Heart left ventricle (tissue), 16 donors: ENCODE measurements at regions of chr1 and their contacts with region 1.

Region 1: GRCh38 chr1:156728597-156729462 is at the start of gene ISG20L2:
- DNase-seq: peak; percentile 96 to 98 (median 97)
- ATAC-seq: peak; percentile 88 to 97 (median 96)
- H3K4me3 ChIP-seq: peak within 1 kb of the TSS; percentile 57 to 96 (median 82)
- H3K27ac ChIP-seq: peak within 1 kb of the TSS; percentile 88 to 99 (median 96)
- H3K4me1 ChIP-seq: peaks cover 22 to 54% (median 36%) of the 10 kb centered on the region in 12 donors
- H3K27me3 ChIP-seq: no peaks in the 10 kb centered on the region
- CTCF ChIP-seq: no peak
- POLR2A ChIP-seq: peak in 1 of 2 donors; percentile 61
- total RNA-seq, gene ISG20L2: 8.4 to 17.9 (median 12.8) TPM

Region 2: DNA sequence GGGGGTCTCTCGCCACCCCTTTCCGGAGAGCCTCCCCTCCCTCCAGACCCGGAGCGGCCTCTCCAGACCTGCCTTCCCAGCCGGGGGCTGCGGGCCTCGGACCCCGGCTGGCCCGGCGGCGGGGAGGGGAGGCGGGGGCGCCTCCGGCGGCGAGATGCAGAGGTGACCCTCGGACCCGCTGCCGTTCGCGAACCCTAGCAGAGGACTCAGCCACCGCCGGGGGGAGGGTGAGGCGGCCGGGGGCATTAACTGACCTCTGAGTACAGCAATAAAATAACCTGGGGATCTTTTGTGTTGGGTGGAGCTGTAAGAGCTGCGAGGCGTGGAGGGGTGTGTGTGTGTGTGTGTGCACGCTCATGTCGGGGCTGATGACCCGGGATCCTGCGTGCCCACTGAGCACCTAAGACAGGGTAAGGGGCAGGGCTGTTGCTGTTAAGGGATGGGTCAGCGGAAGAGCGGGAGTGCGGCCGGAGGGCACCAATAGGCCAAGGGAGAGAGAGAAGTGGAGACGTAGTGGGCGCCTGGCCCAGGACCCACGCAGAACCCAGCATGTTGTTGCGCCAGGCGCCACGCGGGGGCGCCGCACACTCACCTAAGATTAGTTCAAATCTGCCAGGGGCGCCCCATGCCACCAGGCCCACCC is 103.3 kb before region 1 on chr1:
- intact Hi-C with region 1: loop called in 3 of 10 experiments (anchors 2 to 10 kb)
- DNase-seq: peak in 4 of 5 donors; percentile 46 to 81 (median 64)
- ATAC-seq: peak; percentile 40 to 67 (median 48)
- H3K4me3 ChIP-seq: peak overlapping the region; percentile 26 to 59 (median 50)
- H3K27ac ChIP-seq: peak overlapping the region in 9 of 12 donors; percentile 14 to 81 (median 67)
- H3K4me1 ChIP-seq: peaks cover 5 to 36% (median 22%) of the 10 kb centered on the region in 12 donors
- H3K27me3 ChIP-seq: peaks cover 3 to 67% (median 50%) of the 10 kb centered on the region in 9 donors
- CTCF ChIP-seq: peak; percentile 62 to 85 (median 80)
- POLR2A ChIP-seq: no peak

Region 3: GRCh38 chr1:156689035-156689952 is 39.5 kb before region 1 on chr1:
- intact Hi-C with region 1: loop called (anchors 1 to 2 kb)
- DNase-seq: peak; percentile 63 to 82 (median 71)
- ATAC-seq: peak; percentile 75 to 96 (median 88)
- H3K4me3 ChIP-seq: peak overlapping the region in 5 of 12 donors; percentile 3 to 28 (median 8)
- H3K27ac ChIP-seq: no peak overlapping the region
- H3K4me1 ChIP-seq: peaks cover 0 to 19% (median 9%) of the 10 kb centered on the region in 12 donors
- H3K27me3 ChIP-seq: peaks cover 0 to 45% (median 32%) of the 10 kb centered on the region in 9 donors
- CTCF ChIP-seq: peak; percentile 86 to 96 (median 94)
- POLR2A ChIP-seq: no peak

Region 4: GRCh38 chr1:156740679-156741612 is 12.1 kb after region 1 on chr1 and contains the start of gene MRPL24:
- intact Hi-C with region 1: loop called in 1 of 10 experiments (anchors 1 kb)
- DNase-seq: peak; percentile 97 to 98 (median 98)
- ATAC-seq: peak; percentile 92 to 97 (median 94)
- H3K4me3 ChIP-seq: peak within 1 kb of the TSS; percentile 41 to 94 (median 74)
- H3K27ac ChIP-seq: peak within 1 kb of the TSS; percentile 66 to 94 (median 88)
- H3K4me1 ChIP-seq: peaks cover 6 to 34% (median 27%) of the 10 kb centered on the region in 12 donors
- H3K27me3 ChIP-seq: no peaks in the 10 kb centered on the region
- CTCF ChIP-seq: no peak
- POLR2A ChIP-seq: peak in 1 of 2 donors; percentile 47
- total RNA-seq, gene MRPL24: 74.8 to 117 (median 79.6) TPM

Region 5: GRCh38 chr1:156767101-156767878 is 38.5 kb after region 1 on chr1 and contains the start of gene PRCC:
- intact Hi-C with region 1: loop called in 7 of 10 experiments (anchors 1 to 5 kb)
- DNase-seq: peak; percentile 97 to 99 (median 98)
- ATAC-seq: peak; percentile 95 to 98 (median 98)
- H3K4me3 ChIP-seq: peak within 1 kb of the TSS; percentile 52 to 100 (median 80)
- H3K27ac ChIP-seq: peak within 1 kb of the TSS; percentile 81 to 99 (median 95)
- H3K4me1 ChIP-seq: peaks cover 0 to 54% (median 44%) of the 10 kb centered on the region in 12 donors
- H3K27me3 ChIP-seq: no peaks in the 10 kb centered on the region
- CTCF ChIP-seq: no peak
- POLR2A ChIP-seq: peak in 1 of 2 donors; percentile 40
- total RNA-seq, gene PRCC: 34.6 to 55.5 (median 39.0) TPM

Region 6: DNA sequence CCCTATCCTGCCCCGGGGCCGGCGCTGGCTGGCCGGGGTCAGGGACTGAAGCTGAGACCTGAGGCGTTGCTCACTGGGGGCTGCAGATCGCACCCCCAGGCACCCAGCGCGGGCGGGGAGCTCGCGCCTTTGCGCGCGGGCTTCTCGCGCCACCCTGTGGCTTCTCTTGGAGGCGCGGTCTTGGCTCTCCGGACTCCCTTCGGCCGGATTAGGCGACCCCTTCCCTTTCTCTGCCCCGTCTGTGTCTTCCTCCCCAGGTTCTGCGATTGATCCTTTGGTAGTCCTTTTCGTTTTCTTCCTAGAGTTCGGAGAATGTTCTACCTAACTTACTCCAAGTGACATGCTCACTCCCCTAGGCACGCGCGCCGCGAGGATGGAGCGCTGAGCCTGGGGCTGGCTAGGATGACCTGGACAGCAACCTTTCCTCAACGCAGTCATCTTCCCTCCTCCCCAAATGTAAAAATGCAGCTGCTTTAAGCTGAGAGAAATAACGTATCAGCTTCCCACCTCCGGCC is 131.3 kb after region 1 on chr1:
- intact Hi-C with region 1: loop called in 5 of 10 experiments (anchors 10 kb)
- DNase-seq: peak in 3 of 5 donors; percentile 30 to 59 (median 41)
- ATAC-seq: peak; percentile 28 to 80 (median 60)
- H3K4me3 ChIP-seq: peak overlapping the region; percentile 16 to 56 (median 40)
- H3K27ac ChIP-seq: no peak overlapping the region
- H3K4me1 ChIP-seq: peaks cover 12 to 37% (median 29%) of the 10 kb centered on the region in 12 donors
- H3K27me3 ChIP-seq: peaks cover 6 to 63% (median 34%) of the 10 kb centered on the region in 9 donors
- CTCF ChIP-seq: peak; percentile 70 to 93 (median 82)
- POLR2A ChIP-seq: no peak

Region 7: DNA sequence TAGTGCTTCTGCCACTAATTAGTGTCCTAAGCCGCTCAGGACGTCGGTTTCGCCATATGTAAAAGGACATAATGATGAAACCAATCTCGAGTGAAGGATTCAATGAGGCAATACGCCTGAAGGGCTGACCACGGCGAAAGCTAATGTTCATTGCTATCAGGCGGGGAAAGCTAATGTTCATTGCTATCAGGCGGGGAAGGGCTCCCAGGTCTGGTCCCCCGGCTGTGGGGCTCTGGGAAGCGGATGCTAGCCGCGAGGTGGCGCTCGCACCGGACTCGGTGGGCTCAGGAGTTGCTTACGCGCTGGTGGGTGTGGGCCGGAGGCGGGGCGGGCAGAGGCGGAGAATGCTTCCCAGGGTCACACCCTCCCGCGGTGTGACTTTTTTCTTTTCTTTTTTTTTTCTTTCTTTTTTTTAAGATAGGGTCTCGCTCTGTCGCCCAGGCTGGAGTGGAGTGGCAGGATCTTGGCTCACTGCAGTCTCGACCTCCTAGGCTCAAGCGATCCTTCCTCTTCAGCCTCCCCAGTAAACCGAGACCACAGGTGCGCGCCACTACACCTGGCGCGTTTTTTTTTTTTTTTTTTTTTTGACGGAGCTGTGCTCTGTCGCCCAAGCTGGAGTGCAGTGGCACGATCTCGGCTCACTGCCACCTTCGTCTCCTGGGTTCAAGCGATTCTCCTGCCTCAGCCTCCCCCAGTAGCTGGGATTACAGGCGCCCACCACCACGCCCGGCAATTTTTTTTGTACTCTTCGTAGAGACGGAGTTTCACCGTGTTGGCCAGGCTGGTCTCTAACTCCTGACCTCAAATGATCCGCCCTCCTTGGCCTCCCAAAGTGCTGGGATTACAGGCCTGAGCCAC is 163.6 kb after region 1 on chr1:
- intact Hi-C with region 1: loop called in 3 of 10 experiments (anchors 2 to 10 kb)
- DNase-seq: peak; percentile 94 to 96 (median 94)
- ATAC-seq: peak; percentile 80 to 90 (median 86)
- H3K4me3 ChIP-seq: peak overlapping the region in 10 of 12 donors; percentile 18 to 91 (median 72)
- H3K27ac ChIP-seq: peak overlapping the region; percentile 80 to 99 (median 93)
- H3K4me1 ChIP-seq: peaks cover 0 to 55% (median 38%) of the 10 kb centered on the region in 12 donors
- H3K27me3 ChIP-seq: peaks cover 0 to 28% (median 4%) of the 10 kb centered on the region in 9 donors
- CTCF ChIP-seq: peak; percentile 81 to 97 (median 88)
- POLR2A ChIP-seq: no peak